Activated CD8-positive, alpha-beta memory T cell treated with anti-CD3 and anti-CD28 coated beads, Interleukin-2, amount 10 ng/mL, durations not matched to agents 7 days and 5 days (primary cell): ENCODE measurements at regions of chr10 and their contacts with region 1.

Region 1: DNA sequence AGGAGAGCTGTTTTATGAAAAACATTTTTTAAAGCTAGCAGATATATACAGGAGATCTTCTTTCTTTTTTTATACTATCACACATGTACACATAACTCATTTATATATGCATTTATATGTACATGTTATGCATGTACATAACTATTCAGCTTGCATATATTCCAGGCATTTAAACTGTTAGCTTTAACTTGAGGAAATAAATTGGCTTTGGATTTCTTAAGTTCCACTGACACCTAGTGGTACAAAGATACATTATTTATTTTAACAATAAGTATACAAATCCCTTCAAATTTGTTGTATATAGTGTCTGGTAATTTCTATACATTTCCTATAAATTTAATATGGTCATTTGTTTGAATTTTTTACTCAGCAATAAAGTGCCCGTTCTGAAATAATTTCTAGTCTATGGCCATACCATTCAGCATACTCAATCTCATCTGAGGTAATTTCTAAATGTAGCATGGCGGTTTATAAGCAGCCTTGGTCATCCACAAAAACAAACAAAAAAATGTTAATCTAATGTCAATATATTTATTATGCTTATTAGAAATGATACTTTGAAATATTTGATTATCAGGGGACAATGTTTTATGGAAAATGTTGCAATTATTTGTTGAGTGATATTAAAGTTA is 11.6 kb downstream of the ZDHHC6 start:
- DNase-seq: no peak
- ATAC-seq: no peak
- H3K4me3 Mint-ChIP-seq: no peak overlapping the region
- H3K27ac Mint-ChIP-seq: no peak overlapping the region
- H3K4me1 Mint-ChIP-seq: no peaks in the 10 kb centered on the region
- H3K27me3 Mint-ChIP-seq: no peaks in the 10 kb centered on the region

Region 2: GRCh38 chr10:112307358-112308124 is 127.6 kb before region 1 on chr10:
- CTCF ChIA-PET with region 1: interaction called, 10 read pairs
- DNase-seq: peak; percentile 52
- ATAC-seq: peak; percentile 68
- H3K4me3 Mint-ChIP-seq: no peak overlapping the region
- H3K27ac Mint-ChIP-seq: no peak overlapping the region
- H3K4me1 Mint-ChIP-seq: no peaks in the 10 kb centered on the region
- H3K27me3 Mint-ChIP-seq: peaks cover 35% of the 10 kb centered on the region

Region 3: DNA sequence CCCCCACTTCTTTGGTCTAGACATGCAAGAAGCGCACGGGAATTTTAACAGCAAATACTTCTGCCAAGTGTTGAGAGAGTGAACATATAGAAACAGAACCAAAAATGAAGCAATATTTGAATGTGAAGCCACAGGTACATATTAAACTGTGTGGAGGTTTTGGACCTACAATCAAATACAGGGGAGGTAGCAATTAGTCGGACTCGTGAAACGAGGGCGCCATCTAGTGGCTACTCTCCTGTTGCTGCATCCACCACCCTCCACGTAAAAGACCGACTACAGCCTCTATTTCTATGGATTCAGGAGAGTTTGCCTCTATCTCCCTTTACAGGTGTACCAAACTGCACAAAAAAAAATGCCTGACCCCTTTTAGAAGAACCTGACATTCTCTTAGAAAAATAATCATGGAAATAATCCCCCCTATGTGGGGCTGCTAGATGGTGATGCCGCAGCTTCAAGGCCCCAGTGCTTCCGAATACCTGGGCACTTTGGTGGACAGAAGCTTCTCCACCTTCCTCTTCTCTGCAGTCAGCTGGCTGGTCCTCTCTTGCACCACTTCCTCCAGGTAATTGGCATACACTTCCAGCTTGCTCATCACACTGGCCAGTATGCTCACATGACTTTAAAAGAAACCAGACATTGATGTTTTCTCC is 120.2 kb before region 1 on chr10:
- CTCF ChIA-PET with region 1: interaction called, 14 read pairs
- DNase-seq: peak; percentile 79
- ATAC-seq: peak; percentile 81
- H3K4me3 Mint-ChIP-seq: no peak overlapping the region
- H3K27ac Mint-ChIP-seq: no peak overlapping the region
- H3K4me1 Mint-ChIP-seq: no peaks in the 10 kb centered on the region
- H3K27me3 Mint-ChIP-seq: peaks cover 27% of the 10 kb centered on the region

Region 4: DNA sequence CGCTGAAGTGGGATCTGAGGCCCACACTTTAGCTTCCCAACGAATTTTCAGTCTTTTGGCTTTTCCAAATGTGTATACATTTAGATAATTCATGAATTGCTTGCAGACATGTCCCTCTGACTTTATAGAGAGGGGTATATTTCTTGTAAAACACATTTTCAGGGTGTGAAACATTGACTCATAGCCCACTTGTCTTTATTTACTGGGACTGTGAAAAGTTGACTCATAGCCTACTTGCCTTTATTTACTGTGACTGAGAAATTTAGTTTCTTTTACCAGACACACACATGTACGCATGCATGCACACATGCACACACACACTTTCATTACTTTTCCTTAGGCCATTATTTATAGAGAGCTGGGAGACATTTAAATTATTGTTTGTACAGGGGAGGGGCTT is 91.0 kb after region 1 on chr10:
- CTCF ChIA-PET with region 1: no interaction called
- DNase-seq: no peak
- ATAC-seq: peak; percentile 91
- H3K4me3 Mint-ChIP-seq: no peak overlapping the region
- H3K27ac Mint-ChIP-seq: no peak overlapping the region
- H3K4me1 Mint-ChIP-seq: peaks cover 32% of the 10 kb centered on the region
- H3K27me3 Mint-ChIP-seq: peaks cover 4% of the 10 kb centered on the region